Heart right ventricle (tissue), 16 donors: ENCODE measurements at regions of chr16 and their contacts with region 1.

Region 1: GRCh38 chr16:29710227-29711219 is 31.5 kb downstream of the QPRT start:
- DNase-seq: peak in 1 of 2 donors; percentile 21
- ATAC-seq: peak in 7 of 8 donors; percentile 67 to 84 (median 74)
- H3K4me3 ChIP-seq: no peak overlapping the region
- H3K27ac ChIP-seq: no peak overlapping the region
- H3K4me1 ChIP-seq: peaks cover 0 to 22% (median 0%) of the 10 kb centered on the region in 9 donors
- H3K27me3 ChIP-seq: no peaks in the 10 kb centered on the region
- CTCF ChIP-seq: peak; percentile 22 to 69 (median 61)

Region 2: GRCh38 chr16:29775742-29776408 is 65.4 kb after region 1 on chr16:
- intact Hi-C with region 1: loop called in 1 of 10 experiments (anchors 10 kb)
- DNase-seq: no peak
- ATAC-seq: no peak
- H3K4me3 ChIP-seq: no peak overlapping the region
- H3K27ac ChIP-seq: no peak overlapping the region
- H3K4me1 ChIP-seq: peaks cover 0 to 3% (median 0%) of the 10 kb centered on the region in 9 donors
- H3K27me3 ChIP-seq: peaks cover 0 to 27% (median 4%) of the 10 kb centered on the region in 7 donors
- CTCF ChIP-seq: no peak